ENCODE measurements at regions of chr14 and their contacts with region 1.

Region 1: DNA sequence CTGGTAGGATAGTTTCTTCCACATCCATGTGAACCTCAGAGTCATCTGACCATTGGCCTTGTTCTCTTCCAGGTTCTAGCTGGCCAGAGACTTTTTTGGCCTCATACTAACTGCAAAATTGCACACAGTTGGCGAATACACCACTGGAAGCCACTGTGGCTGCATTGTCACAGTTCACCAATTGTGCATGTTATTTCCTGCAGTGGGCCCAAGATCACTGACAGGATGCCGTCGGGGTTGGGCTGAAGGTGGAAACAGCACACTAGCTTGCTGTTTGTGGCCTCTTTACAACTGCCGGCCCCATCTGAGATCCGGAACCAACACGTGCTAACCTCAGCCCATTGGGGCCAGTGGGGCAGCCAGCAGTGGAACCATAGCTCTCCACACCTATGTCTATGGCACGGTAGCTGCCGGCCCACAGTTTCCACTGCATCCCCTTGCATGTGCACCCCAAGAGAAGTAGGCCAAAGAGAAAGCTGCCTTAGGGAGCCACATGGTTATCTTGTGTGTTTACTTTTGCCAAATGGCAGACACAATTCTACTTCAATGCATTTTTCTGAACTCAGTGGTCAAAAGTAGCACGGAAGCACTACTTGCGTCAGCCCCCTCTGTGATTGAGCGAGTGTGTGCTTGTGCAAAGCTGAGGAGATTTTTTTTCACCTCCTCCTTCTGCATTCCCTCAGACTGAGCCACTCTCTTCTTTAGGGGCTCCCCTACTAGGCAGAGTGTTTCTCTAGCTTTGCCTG is 464.0 kb downstream of the RAD51B start:
- DNase-seq: peak; percentile 20 to 70 (median 62)
- ATAC-seq: peak; percentile 78
- H3K4me3 ChIP-seq: peak overlapping the region; percentile 14
- H3K4me3 Mint-ChIP-seq: peak overlapping the region; percentile 44 to 86 (median 72)
- H3K27ac ChIP-seq: peak overlapping the region; percentile 74
- H3K27ac Mint-ChIP-seq: peak overlapping the region; percentile 93 to 99 (median 97)
- H3K4me1 ChIP-seq: peaks cover 36 to 70% of the 10 kb centered on the region in 2 donors
- H3K4me1 Mint-ChIP-seq: peaks cover 44 to 96% (median 86%) of the 10 kb centered on the region in 7 donors
- H3K27me3 ChIP-seq: no peaks in the 10 kb centered on the region
- H3K27me3 Mint-ChIP-seq: no peaks in the 10 kb centered on the region

Region 2: DNA sequence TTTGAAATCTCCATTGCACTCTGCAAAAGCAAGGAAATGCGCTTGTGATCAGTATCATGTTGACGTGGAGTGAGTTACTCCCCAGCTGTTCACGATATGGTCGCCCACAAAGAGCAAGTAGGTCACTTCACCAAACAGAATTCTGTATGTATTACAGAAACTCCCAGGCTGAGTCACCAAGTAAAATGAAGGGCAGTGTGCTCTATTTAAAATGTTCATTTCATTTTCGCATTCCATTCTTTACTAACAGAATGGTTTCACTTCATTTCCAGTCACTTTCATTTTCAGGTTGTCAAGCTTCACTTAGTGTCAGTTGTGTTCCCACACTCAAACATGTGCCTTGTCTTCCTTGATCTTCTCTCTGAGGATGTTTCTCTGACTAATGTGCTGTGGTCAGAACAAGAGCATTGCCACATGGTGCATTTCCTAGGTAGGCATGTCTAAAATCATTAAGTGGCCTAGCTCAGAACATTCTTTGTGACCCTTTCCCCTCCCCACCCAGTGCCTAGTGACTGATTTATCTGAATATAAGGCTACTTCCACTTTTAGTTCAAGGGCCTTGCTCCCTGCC is 72.7 kb before region 1 on chr14:
- CTCF ChIA-PET with region 1: no interaction called
- POLR2A ChIA-PET with region 1: no interaction called
- intact Hi-C with region 1: loop called in 1 of 2 experiments (anchors 2 kb)
- DNase-seq: peak in 8 of 9 donors; percentile 10 to 54 (median 43)
- ATAC-seq: peak; percentile 86
- H3K4me3 ChIP-seq: peak overlapping the region; percentile 59
- H3K4me3 Mint-ChIP-seq: peak overlapping the region; percentile 75 to 90 (median 88)
- H3K27ac ChIP-seq: peak overlapping the region; percentile 23
- H3K27ac Mint-ChIP-seq: peak overlapping the region; percentile 71 to 94 (median 87)
- H3K4me1 ChIP-seq: peaks cover 28 to 33% of the 10 kb centered on the region in 2 donors
- H3K4me1 Mint-ChIP-seq: peaks cover 31 to 50% (median 38%) of the 10 kb centered on the region in 7 donors
- H3K27me3 ChIP-seq: no peaks in the 10 kb centered on the region
- H3K27me3 Mint-ChIP-seq: peaks cover 0 to 2% (median 0%) of the 10 kb centered on the region in 5 donors

Region 3: GRCh38 chr14:68268197-68268596 is 15.4 kb before region 1 on chr14:
- CTCF ChIA-PET with region 1: interaction called, 4 read pairs
- POLR2A ChIA-PET with region 1: interaction called, 22 read pairs
- intact Hi-C with region 1: loop called in 1 of 2 experiments (anchors 2 kb)
- DNase-seq: peak in 1 of 9 donors; percentile 23
- ATAC-seq: peak; percentile 79
- H3K4me3 ChIP-seq: no peak overlapping the region
- H3K4me3 Mint-ChIP-seq: peak overlapping the region in 9 of 10 donors; percentile 4 to 68 (median 57)
- H3K27ac ChIP-seq: peak overlapping the region; percentile 40
- H3K27ac Mint-ChIP-seq: peak overlapping the region; percentile 11 to 94 (median 88)
- H3K4me1 ChIP-seq: peaks cover 10 to 43% of the 10 kb centered on the region in 2 donors
- H3K4me1 Mint-ChIP-seq: peaks cover 31 to 79% (median 74%) of the 10 kb centered on the region in 7 donors
- H3K27me3 ChIP-seq: no peaks in the 10 kb centered on the region
- H3K27me3 Mint-ChIP-seq: no peaks in the 10 kb centered on the region

Region 4: DNA sequence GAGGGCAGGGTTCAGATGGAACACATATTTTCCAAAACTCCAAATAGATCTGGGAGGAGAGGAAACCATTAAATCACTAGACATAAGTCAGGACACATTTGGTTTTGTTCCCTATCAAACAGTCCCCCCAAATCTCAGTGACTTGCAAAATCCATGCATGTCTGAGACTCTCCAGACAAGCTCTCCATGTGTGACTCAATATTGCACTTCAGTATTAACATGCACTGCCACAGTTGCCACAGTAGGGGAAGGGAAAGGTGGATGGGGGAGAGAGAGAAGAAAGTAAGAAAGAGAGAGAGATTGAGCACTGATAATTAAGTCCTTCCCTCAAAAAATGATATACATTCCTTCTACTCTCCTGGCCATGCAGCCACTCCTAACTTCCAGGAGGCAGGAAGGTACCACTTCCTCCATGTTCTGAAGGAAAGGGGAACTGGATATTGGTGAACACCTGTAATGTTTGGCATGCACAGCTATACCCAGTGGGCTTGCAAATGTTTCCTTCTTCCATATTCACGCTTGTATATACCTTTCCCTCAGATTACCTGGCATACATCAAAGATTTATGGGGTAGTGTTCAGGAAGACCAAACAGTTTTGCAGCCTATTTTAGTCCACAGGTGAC is 199.3 kb after region 1 on chr14:
- CTCF ChIA-PET with region 1: no interaction called
- POLR2A ChIA-PET with region 1: interaction called, 11 read pairs
- intact Hi-C with region 1: loop called in 1 of 2 experiments (anchors 10 kb)
- DNase-seq: no peak
- ATAC-seq: no peak
- H3K4me3 ChIP-seq: no peak overlapping the region
- H3K4me3 Mint-ChIP-seq: peak overlapping the region in 9 of 10 donors; percentile 28 to 85 (median 39)
- H3K27ac ChIP-seq: no peak overlapping the region
- H3K27ac Mint-ChIP-seq: peak overlapping the region in 8 of 9 donors; percentile 71 to 96 (median 92)
- H3K4me1 ChIP-seq: peaks cover 22 to 48% of the 10 kb centered on the region in 2 donors
- H3K4me1 Mint-ChIP-seq: peaks cover 37 to 84% (median 79%) of the 10 kb centered on the region in 7 donors
- H3K27me3 ChIP-seq: no peaks in the 10 kb centered on the region
- H3K27me3 Mint-ChIP-seq: no peaks in the 10 kb centered on the region

Region 5: DNA sequence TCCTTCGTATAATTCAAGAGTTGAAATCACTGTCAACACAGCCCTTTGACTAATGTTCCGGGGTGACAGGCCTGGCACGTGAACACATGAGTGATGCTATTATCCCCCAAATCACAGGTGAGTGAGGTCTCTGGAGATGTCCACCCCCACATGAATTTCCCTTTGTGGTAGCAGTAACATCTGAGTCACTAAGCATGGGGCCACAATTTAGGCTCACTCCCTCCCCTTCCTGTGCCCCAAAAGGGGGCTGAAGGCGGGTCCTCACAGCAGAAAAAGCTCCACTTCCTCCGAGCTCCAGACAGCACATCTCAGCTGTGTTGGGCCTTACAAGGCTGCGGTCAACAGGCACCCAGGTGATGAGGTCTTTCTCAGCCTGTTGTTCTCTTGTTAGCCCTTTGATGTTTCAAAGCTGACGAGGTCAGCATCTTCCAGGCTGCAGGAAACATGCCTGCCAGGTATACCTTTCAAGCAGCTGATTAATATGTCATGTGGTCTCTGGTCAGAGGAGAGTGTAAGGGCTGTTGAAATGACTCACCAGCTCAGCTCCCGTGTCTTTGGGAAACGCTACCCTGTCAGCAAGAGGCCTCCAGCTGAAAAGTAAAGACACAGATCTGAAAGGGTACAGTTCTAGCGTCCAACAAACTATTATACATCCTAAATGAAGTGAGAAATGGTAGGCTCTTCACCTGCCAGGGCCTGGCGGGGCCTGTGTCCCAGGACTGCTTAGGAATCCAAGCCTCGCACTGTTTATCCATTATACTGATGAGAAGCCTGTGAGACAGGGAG is 402.1 kb after region 1 on chr14:
- CTCF ChIA-PET with region 1: no interaction called
- POLR2A ChIA-PET with region 1: interaction called, 4 read pairs
- intact Hi-C with region 1: loop called (anchors 5 to 10 kb)
- DNase-seq: peak; percentile 31 to 74 (median 64)
- ATAC-seq: peak; percentile 91
- H3K4me3 ChIP-seq: no peak overlapping the region
- H3K4me3 Mint-ChIP-seq: peak overlapping the region; percentile 3 to 74 (median 48)
- H3K27ac ChIP-seq: peak overlapping the region; percentile 25
- H3K27ac Mint-ChIP-seq: peak overlapping the region; percentile 74 to 97 (median 91)
- H3K4me1 ChIP-seq: peaks cover 44 to 53% of the 10 kb centered on the region in 2 donors
- H3K4me1 Mint-ChIP-seq: peaks cover 52 to 74% (median 59%) of the 10 kb centered on the region in 7 donors
- H3K27me3 ChIP-seq: no peaks in the 10 kb centered on the region
- H3K27me3 Mint-ChIP-seq: no peaks in the 10 kb centered on the region

Region 6: GRCh38 chr14:69068744-69069421 is 785.3 kb after region 1 on chr14:
- CTCF ChIA-PET with region 1: no interaction called
- POLR2A ChIA-PET with region 1: no interaction called
- intact Hi-C with region 1: no loop called
- DNase-seq: no peak
- ATAC-seq: no peak
- H3K4me3 ChIP-seq: no peak overlapping the region
- H3K4me3 Mint-ChIP-seq: no peak overlapping the region
- H3K27ac ChIP-seq: no peak overlapping the region
- H3K27ac Mint-ChIP-seq: peak overlapping the region in 1 of 9 donors; percentile 36
- H3K4me1 ChIP-seq: no peaks in the 10 kb centered on the region
- H3K4me1 Mint-ChIP-seq: peaks cover 0 to 17% (median 0%) of the 10 kb centered on the region in 7 donors
- H3K27me3 ChIP-seq: no peaks in the 10 kb centered on the region
- H3K27me3 Mint-ChIP-seq: no peaks in the 10 kb centered on the region